Psoas muscle (tissue), 8 donors: ENCODE measurements at regions of chr6 and their contacts with region 1.

Region 1: GRCh38 chr6:149834513-149835481 is 29.4 kb downstream of the LRP11 start:
- DNase-seq: no peak
- ATAC-seq: peak; percentile 62 to 83 (median 76)
- H3K4me3 ChIP-seq: no peak overlapping the region
- H3K27ac ChIP-seq: no peak overlapping the region
- H3K4me1 ChIP-seq: no peaks in the 10 kb centered on the region
- H3K27me3 ChIP-seq: no peaks in the 10 kb centered on the region
- CTCF ChIP-seq: peak; percentile 94

Region 2: DNA sequence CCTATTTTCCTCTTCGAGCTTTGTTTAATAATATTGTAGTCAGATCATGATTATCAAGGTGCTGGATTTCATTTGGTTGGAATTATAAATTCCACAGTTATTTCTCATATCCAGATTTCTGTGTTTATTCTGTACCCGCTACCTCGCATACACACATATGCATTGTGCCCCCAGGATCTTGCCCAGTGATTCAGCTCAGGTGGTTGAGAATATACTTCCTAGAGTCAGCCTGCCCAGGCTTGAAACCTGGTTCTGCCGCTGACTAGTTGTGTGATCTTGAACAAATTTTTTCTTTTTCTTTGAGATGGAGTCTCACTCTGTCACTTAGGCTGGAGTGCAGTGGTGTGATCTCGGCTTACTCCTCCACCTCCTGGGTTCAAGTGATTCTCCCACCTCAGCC is 253.9 kb before region 1 on chr6:
- intact Hi-C with region 1: no loop called
- DNase-seq: no peak
- ATAC-seq: no peak
- H3K4me3 ChIP-seq: no peak overlapping the region
- H3K27ac ChIP-seq: no peak overlapping the region
- H3K4me1 ChIP-seq: no peaks in the 10 kb centered on the region
- H3K27me3 ChIP-seq: no peaks in the 10 kb centered on the region
- CTCF ChIP-seq: no peak

Region 3: DNA sequence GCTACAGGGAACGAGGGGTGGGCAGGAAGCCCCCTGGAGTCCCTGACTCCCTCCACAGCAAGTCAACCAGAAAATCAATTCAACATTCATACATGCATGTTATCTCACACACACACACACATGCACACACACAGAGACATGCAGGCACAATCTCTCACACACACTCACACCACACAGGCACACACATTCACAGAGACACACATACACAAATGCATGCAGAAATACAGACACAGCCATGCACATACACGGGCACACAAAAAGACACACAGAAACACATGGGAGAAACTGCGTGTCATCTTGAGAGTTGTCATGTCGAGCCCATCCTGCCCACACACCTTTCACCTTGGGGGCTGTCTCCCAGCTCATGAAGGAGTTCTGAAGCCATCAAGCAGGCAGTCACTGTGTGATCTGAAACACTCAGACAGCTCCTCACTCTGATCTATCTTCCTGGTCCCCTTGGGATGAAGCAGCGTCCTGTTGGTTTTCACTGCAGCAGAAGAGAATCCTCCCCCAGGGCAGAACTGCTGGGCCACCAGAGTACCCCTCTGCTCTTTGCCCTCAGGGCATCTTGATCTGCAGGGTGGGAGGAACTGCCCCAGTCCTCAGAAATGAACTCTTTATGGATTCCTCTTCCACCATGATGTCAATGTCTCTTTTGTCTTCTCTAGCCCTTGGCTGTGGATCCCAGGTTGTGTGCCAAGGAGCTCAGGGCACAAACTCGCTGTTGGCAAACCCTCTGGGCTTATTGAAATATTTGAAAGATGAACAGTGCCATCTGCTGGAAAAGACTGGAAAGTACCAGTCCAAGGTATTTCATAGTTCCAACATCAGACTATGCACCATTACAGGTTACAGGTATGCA is 181.8 kb after region 1 on chr6:
- intact Hi-C with region 1: loop called in 1 of 2 experiments (anchors 5 kb)
- DNase-seq: no peak
- ATAC-seq: peak; percentile 78 to 91 (median 90)
- H3K4me3 ChIP-seq: no peak overlapping the region
- H3K27ac ChIP-seq: no peak overlapping the region
- H3K4me1 ChIP-seq: no peaks in the 10 kb centered on the region
- H3K27me3 ChIP-seq: peaks cover 0 to 55% (median 14%) of the 10 kb centered on the region in 3 donors
- CTCF ChIP-seq: peak; percentile 74